ENCODE measurements at regions of chr3 and their contacts with region 1.

Region 1: GRCh38 chr3:195914648-195915473 is 6.5 kb upstream of the TNK2 start:
- DNase-seq: peak; percentile 89 to 97
- H3K4me3 ChIP-seq: peak overlapping the region in 1 of 2 donors; percentile 36
- H3K27ac ChIP-seq: peak overlapping the region; percentile 78 to 93
- H3K4me1 ChIP-seq: peaks cover 0 to 25% (median 21%) of the 10 kb centered on the region in 4 donors
- H3K27me3 ChIP-seq: peaks cover 0 to 3% of the 10 kb centered on the region in 2 donors
- CTCF ChIP-seq: peak; percentile 92 to 97

Region 2: DNA sequence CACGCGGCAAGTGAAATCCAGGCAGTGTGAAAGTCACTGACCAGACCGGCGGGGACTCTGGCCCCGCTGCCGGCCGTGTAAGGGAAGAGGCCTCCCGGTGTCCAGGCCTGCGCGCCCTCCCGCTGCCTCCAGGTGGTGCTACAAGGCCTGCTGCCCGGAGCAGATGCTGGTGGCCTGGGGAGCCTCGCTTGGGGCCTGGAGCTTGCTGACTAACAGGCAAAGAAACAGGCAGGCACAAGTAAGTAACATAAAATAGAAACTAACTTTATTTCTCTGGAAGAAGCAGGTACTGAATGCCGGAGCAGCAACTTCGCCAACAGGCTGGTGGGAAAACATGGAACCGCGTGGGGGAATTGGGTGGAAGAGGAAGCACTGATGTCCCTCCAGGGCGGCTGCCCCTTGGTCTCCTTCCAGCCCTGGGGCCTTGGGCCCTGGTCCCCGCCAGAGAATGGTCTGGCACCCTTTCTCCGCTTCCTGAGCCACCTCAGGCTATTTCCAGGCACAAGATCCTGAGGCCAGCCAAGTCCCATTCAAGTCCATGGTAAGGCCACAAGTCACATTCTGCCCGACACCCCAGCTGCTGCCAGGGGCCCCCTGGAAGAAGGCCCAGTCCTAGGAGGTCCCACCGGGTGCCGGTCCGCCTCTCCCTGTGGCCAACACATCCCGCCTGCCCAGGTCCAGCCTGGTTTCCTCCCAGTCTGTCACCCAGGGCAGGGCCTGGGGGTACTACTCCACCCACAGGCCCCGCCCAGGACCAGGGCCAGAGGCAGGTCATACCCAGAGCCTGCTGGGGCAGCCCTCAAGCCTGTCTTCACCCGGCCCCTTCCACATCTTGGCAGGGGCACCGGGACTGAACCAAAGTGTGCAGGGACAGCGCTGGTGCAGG is 51.5 kb before region 1 on chr3:
- intact Hi-C with region 1: loop called (anchors 2 kb)
- DNase-seq: peak; percentile 92 to 96
- H3K4me3 ChIP-seq: peak overlapping the region in 1 of 2 donors; percentile 8
- H3K27ac ChIP-seq: peak overlapping the region; percentile 81 to 82
- H3K4me1 ChIP-seq: peaks cover 0 to 20% (median 14%) of the 10 kb centered on the region in 4 donors
- H3K27me3 ChIP-seq: no peaks in the 10 kb centered on the region
- CTCF ChIP-seq: peak; percentile 97 to 98

Region 3: DNA sequence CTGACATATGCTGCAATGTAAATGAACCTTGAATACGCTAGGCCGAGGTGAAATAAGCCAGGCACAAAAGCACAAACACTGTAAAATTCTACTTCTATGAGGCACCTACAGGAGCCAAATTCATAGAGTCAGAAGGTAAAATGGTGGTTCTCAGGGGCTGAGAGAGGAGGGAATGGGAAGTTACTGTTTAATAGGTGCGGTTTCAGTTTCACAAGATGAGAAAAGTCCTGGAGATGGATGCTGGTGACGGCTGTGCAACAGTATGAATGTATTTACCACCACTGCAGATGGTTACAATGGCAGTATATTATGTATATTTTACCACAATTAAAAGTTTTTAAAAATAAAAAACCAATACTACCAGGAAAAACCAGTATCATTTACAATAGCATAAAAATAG is 10.5 kb before region 1 on chr3:
- intact Hi-C with region 1: no loop called
- DNase-seq: no peak
- H3K4me3 ChIP-seq: no peak overlapping the region
- H3K27ac ChIP-seq: no peak overlapping the region
- H3K4me1 ChIP-seq: peaks cover 0 to 37% (median 22%) of the 10 kb centered on the region in 4 donors
- H3K27me3 ChIP-seq: no peaks in the 10 kb centered on the region
- CTCF ChIP-seq: no peak

Region 4: GRCh38 chr3:196111939-196112386 is 197.1 kb after region 1 on chr3:
- intact Hi-C with region 1: no loop called
- DNase-seq: no peak
- H3K4me3 ChIP-seq: no peak overlapping the region
- H3K27ac ChIP-seq: no peak overlapping the region
- H3K4me1 ChIP-seq: no peaks in the 10 kb centered on the region
- H3K27me3 ChIP-seq: no peaks in the 10 kb centered on the region
- CTCF ChIP-seq: no peak

Region 5: DNA sequence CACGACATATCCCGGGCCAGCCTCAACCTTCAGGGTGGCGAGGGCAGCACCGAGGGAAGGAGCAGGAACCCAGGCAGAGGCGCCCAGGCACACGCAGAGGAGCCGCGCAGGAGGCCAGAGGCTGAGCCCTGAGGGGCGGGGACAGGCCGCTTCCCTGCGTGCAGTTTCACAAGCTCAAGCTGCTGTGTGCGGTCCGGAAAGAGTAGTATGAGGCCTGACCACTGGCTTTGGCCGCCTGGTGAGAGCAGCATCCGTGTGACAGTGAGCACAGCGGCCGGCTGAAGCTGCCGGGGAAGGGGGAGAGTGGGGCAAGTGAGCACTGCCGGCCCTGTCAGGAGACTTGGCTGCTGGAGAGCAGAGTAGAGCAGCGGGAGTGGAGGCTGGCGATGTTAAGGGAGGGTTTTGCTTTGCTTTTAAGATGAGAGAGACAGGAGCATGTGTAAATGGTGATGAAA is 287.7 kb after region 1 on chr3:
- intact Hi-C with region 1: no loop called
- DNase-seq: peak in 1 of 2 donors; percentile 51
- H3K4me3 ChIP-seq: no peak overlapping the region
- H3K27ac ChIP-seq: no peak overlapping the region
- H3K4me1 ChIP-seq: peaks cover 0 to 5% (median 0%) of the 10 kb centered on the region in 4 donors
- H3K27me3 ChIP-seq: peaks cover 0 to 41% of the 10 kb centered on the region in 2 donors
- CTCF ChIP-seq: no peak

Measured in tibial artery (tissue), 4 donors.